WTC11 (cell line): ENCODE measurements at regions of chr5 and their contacts with region 1.

Region 1: DNA sequence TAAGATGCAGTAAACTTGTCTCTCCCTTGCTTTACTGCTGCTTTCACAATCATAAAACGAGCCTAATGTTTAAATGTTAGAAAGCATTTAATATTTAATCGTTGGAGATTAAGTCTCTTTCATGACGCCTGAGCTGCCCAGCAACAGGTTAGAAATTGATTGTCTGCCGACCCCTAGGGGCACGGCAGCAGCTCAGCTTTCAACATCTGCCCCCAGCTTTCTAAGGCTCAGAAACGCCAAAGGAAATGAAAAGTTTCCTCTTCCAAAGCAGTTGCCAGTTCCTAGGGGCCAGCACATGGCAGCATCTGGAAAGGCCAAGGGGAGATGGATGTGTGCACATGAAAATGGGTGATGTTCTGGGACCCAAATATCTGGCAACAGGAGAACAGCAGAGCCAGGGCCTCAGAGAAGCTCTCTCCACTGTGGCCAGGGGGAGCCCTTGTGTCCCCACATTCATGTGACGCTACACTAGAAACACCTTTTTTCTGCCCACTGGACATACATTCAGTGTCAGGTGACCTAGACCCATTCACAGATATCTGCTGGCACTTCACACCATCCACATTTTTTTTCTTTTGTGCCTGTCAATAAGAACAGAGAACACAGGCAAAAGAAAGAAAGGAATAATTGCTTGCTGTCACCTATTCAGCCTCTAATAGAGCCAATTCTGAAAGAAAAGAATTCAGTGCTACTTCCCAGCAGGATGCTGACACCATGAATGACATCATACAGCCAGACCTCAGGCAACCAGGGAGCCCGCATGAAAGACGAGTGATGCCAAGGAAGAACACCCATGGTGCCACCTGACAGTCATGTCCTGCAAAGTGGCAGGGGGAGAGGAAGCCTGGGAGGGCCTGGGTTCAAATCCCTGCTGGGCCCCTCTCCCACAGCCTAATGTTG is 205.0 kb upstream of the TAS2R1 start:
- DNase-seq: no peak
- ATAC-seq: peak; percentile 41
- H3K4me3 Mint-ChIP-seq: no peak overlapping the region
- H3K27ac Mint-ChIP-seq: peak overlapping the region; percentile 28; the same call in 1 of the 2 replicates
- H3K4me1 Mint-ChIP-seq: peaks cover 56% of the 10 kb centered on the region
- H3K27me3 Mint-ChIP-seq: no peaks in the 10 kb centered on the region
- CTCF ChIP-seq: no peak

Region 2: GRCh38 chr5:9681706-9682105 is 153.4 kb before region 1 on chr5:
- CTCF ChIA-PET with region 1: no interaction called
- POLR2A ChIA-PET with region 1: no interaction called
- DNase-seq: no peak
- ATAC-seq: no peak
- H3K4me3 Mint-ChIP-seq: no peak overlapping the region
- H3K27ac Mint-ChIP-seq: no peak overlapping the region
- H3K4me1 Mint-ChIP-seq: peaks cover 3% of the 10 kb centered on the region; the same call in 1 of the 2 replicates
- H3K27me3 Mint-ChIP-seq: no peaks in the 10 kb centered on the region
- CTCF ChIP-seq: no peak

Region 3: DNA sequence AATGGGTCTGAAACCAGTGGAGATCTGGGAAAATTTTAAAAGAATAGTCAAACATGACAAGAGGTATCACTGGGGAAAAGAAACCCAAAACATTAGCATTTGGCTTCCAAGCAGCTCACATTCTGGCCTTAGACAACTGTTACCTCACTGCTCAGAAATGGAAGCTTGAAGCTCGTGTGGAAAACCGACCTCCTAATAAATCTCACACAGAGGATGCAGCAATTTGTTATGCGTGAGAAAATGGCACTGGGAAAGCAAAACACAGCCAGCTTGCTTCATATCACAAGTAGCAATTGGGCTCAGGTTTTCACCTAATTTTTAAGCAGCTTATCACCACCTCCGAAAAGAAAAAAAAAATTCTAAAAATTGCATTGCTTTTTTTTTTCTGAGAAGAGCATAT is 101.6 kb before region 1 on chr5:
- CTCF ChIA-PET with region 1: no interaction called
- POLR2A ChIA-PET with region 1: no interaction called
- DNase-seq: no peak
- ATAC-seq: no peak
- H3K4me3 Mint-ChIP-seq: no peak overlapping the region
- H3K27ac Mint-ChIP-seq: no peak overlapping the region
- H3K4me1 Mint-ChIP-seq: no peaks in the 10 kb centered on the region
- H3K27me3 Mint-ChIP-seq: no peaks in the 10 kb centered on the region; the same call in 1 of the 2 replicates
- CTCF ChIP-seq: no peak

Region 4: DNA sequence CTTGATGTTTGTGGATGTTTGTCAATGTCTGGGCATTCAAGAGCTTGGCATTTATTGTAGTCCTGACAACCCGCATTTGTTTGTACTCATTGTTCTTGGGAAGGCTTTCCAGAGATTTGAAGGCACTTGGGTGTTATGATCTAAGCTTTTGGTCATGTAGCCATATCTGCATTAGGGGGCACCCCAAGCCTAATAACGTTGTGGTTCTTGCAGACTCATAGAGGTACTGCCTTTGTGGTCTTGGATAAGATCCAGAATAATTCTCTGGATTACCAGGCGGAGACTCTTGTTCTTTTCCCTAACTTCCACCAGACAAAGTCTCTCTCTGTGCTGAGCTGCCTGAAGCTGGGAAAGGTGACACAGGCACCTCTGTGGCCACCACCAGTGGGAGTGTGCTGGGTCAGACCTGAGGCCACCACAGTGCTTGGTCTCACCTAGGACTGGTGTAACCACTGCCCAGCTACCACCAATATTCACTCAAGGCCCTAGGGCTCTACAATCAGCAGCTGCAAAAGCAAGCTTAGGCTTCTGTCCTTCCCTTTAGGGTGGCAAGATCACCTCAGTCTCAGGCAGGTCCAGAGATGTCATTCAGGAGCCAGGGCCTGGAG is 60.5 kb before region 1 on chr5:
- CTCF ChIA-PET with region 1: interaction called, 11 read pairs
- POLR2A ChIA-PET with region 1: no interaction called
- DNase-seq: peak; percentile 27
- ATAC-seq: peak; percentile 85
- H3K4me3 Mint-ChIP-seq: no peak overlapping the region
- H3K27ac Mint-ChIP-seq: no peak overlapping the region
- H3K4me1 Mint-ChIP-seq: no peaks in the 10 kb centered on the region
- H3K27me3 Mint-ChIP-seq: no peaks in the 10 kb centered on the region
- CTCF ChIP-seq: no peak

Region 5: DNA sequence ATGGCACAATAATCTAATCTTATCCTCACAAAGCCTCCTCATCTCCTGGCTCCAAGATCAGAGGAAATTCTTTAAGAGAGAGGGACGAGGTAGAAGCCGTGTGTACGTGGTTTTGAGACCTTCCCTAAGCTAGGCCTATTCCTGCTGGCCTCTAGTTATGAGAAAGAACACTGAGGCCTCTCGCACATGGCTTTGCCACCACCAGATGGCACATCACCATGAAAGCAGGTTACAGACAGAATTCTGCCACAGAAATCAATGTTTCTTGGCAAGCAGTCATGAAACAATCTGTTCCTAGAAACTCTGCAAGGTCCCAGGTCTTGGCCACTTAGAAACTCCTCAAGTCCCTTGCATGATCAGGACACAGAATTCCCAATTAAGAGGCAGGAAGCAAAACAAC is 63.2 kb after region 1 on chr5:
- CTCF ChIA-PET with region 1: interaction called, 13 read pairs
- POLR2A ChIA-PET with region 1: no interaction called
- DNase-seq: peak; percentile 52
- ATAC-seq: peak; percentile 80
- H3K4me3 Mint-ChIP-seq: no peak overlapping the region
- H3K27ac Mint-ChIP-seq: no peak overlapping the region
- H3K4me1 Mint-ChIP-seq: peaks cover 28% of the 10 kb centered on the region
- H3K27me3 Mint-ChIP-seq: no peaks in the 10 kb centered on the region; the same call in 1 of the 2 replicates
- CTCF ChIP-seq: no peak